Mammary epithelial cell (primary cell): ENCODE measurements at regions of chr13 and their contacts with region 1.

Region 1: DNA sequence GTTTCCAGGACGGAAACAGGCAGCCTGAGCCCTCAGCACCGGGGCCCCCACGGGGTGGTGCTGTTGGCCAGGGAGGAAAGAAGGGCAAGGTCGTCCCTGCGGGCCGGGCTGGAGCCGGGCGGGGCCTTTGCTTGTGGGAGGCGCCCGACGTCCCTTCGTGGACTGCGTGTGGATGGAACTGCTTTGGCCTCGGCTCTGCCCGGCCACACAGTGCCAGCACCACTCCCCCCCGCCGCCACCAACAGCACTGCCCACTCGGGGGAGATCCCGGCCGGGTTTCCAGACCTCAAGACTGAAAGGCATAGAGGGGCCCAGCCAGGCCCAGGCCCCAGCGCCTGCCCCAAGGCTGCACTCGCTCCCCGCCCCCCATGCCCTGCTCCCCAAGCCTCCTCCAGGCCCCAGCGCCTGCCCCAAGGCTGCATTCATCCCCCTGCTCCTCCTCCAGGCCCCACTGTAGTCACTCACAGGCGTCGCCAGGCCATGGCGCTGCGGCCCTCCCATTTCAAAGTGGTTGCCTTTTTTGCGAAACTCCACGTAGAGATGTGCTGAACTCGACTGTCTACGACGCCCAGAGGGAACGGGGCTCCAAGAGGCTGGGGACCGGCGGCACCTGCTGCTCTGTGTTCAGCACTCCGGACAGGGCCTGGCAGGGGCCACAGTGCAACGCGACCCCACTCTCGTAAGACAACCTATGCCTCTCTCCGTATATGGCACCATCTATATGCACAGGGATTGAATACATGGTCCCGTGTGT is 22.5 kb downstream of the C13orf46 start:
- DNase-seq: peak; percentile 68
- H3K4me3 ChIP-seq: no peak overlapping the region
- H3K27ac ChIP-seq: no peak overlapping the region
- H3K4me1 ChIP-seq: peaks cover 17% of the 10 kb centered on the region
- H3K27me3 ChIP-seq: no peaks in the 10 kb centered on the region
- CTCF ChIP-seq: peak; percentile 74 to 98

Region 2: GRCh38 chr13:112942689-112943308 is 1008.6 kb before region 1 on chr13:
- CTCF ChIA-PET with region 1: no interaction called
- dilution Hi-C with region 1: no loop called
- in situ Hi-C with region 1: no loop called
- intact Hi-C with region 1: loop called (anchors 10 kb)
- DNase-seq: peak; percentile 84
- H3K4me3 ChIP-seq: peak overlapping the region; percentile 43 to 52 (median 49)
- H3K27ac ChIP-seq: no peak overlapping the region
- H3K4me1 ChIP-seq: peaks cover 20% of the 10 kb centered on the region
- H3K27me3 ChIP-seq: peaks cover 4% of the 10 kb centered on the region
- CTCF ChIP-seq: peak; percentile 97 to 99

Region 3: DNA sequence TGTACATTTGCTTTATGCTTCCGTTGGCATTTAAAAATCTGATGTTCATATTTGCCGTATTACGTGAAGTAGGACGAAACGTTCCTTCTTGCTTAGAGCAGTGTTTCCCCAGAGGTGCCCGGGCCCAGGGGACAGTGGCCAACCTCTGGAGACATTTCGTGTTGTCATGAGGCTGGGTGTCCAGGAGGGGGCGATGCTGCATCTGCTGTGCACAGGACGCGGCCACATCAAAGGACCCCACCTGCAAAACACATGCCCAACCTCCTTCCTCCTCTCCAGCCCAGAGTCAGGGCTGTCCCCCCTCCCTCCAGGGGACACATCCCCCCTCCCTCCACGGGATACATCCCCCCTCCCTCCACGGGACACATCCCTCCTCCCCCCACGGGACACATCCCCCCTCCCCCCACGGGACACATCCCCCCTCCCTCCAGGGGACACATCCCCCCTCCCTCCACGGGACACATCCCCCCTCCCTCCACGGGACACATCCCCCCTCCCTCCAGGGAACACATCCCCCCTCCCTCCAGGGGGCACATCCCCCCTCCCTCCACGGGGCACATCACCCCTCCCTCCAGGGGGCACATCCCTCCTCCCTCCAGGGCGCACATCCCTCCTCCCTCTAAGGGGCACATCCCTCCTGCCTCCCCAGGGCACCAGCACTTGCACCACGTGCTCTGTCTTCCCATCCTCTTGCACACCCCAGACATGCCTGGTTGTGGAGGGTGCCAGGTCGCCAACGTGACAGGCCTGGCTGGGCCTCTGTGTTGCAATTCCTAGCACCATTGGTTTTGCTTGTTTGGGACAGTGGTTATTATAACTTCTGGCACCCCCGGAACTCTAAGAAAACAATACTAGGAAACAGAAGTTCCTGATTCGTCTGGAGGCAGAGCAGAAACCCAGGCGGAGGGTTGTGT is 134.2 kb before region 1 on chr13:
- CTCF ChIA-PET with region 1: interaction called, 3 read pairs
- dilution Hi-C with region 1: no loop called
- in situ Hi-C with region 1: no loop called
- intact Hi-C with region 1: loop called (anchors 1 kb)
- DNase-seq: peak; percentile 75
- H3K4me3 ChIP-seq: no peak overlapping the region
- H3K27ac ChIP-seq: no peak overlapping the region
- H3K4me1 ChIP-seq: peaks cover 30% of the 10 kb centered on the region
- H3K27me3 ChIP-seq: no peaks in the 10 kb centered on the region
- CTCF ChIP-seq: peak; percentile 76 to 95

Region 4: DNA sequence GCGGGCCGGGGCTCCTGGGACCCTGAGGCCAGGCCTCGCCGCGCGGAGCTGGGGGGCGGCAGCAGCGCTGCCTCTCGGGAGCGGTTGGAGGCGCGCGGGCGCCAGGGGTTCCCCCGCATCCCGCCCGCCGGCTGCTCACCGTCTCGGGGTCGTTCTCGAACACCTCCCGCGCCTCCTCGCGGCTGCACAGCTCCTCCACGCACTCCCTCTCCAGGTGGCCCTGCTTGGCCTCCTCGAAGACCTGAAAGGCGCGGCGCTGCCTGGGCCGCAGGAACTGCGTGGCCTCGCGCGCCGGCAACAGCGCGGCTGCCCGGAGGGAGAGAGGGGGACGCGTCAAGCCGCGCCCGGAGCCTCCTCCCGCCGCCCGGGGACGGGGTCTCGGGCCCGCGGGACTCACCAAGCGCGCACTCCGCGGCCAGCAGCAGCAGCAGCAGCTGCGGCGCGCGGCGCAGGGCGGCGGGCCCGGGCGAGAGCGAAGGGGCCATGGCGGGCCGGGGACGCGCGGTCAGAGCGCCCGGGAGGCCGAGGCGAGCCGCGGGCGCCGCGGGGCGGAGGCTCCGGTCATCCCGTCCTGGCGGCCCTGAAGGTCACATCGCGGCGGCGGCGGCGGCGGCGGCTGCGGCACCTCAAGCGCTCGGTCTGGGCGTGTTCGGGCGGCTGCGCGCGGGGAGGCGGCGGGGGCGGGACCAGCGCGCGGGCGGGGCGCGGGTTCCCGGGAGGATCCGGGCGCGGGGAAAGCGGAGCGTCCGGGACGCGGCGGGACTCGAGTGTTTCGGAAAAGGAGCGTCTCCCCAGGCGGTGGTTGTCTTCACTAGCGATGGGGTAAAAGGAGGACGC is 87.8 kb before region 1 on chr13 and contains the start of gene GAS6:
- CTCF ChIA-PET with region 1: no interaction called
- dilution Hi-C with region 1: loop called (anchors 5 kb)
- in situ Hi-C with region 1: no loop called
- intact Hi-C with region 1: loop called (anchors 1 kb)
- DNase-seq: peak; percentile 46
- H3K4me3 ChIP-seq: peak within 1 kb of the TSS; percentile 45 to 86 (median 66)
- H3K27ac ChIP-seq: peak within 1 kb of the TSS; percentile 71
- H3K4me1 ChIP-seq: peaks cover 38% of the 10 kb centered on the region
- H3K27me3 ChIP-seq: no peaks in the 10 kb centered on the region
- CTCF ChIP-seq: peak in 1 of 2 donors; percentile 32
- total RNA-seq, gene GAS6: 221 to 311 TPM

Region 5: GRCh38 chr13:114035583-114036531 is 84.4 kb after region 1 on chr13:
- CTCF ChIA-PET with region 1: no interaction called
- dilution Hi-C with region 1: loop called (anchors 10 kb)
- in situ Hi-C with region 1: no loop called
- intact Hi-C with region 1: no loop called
- DNase-seq: no peak
- H3K4me3 ChIP-seq: no peak overlapping the region
- H3K27ac ChIP-seq: no peak overlapping the region
- H3K4me1 ChIP-seq: no peaks in the 10 kb centered on the region
- H3K27me3 ChIP-seq: peaks cover 2% of the 10 kb centered on the region
- CTCF ChIP-seq: no peak

Region 6: GRCh38 chr13:114132419-114133121 is 181.1 kb after region 1 on chr13 and contains the start of gene RASA3:
- CTCF ChIA-PET with region 1: no interaction called
- dilution Hi-C with region 1: no loop called
- in situ Hi-C with region 1: no loop called
- intact Hi-C with region 1: loop called (anchors 1 kb)
- DNase-seq: peak; percentile 71
- H3K4me3 ChIP-seq: peak within 1 kb of the TSS; percentile 33 to 64 (median 50)
- H3K27ac ChIP-seq: no peak within 1 kb of the TSS
- H3K4me1 ChIP-seq: peaks cover 16% of the 10 kb centered on the region
- H3K27me3 ChIP-seq: no peaks in the 10 kb centered on the region
- CTCF ChIP-seq: no peak
- total RNA-seq, gene RASA3: 5.2 to 8.4 TPM

Region 7: GRCh38 chr13:114226699-114227323 is 275.4 kb after region 1 on chr13:
- CTCF ChIA-PET with region 1: no interaction called
- dilution Hi-C with region 1: no loop called
- in situ Hi-C with region 1: no loop called
- intact Hi-C with region 1: loop called (anchors 1 kb)
- DNase-seq: peak; percentile 69
- H3K4me3 ChIP-seq: no peak overlapping the region
- H3K27ac ChIP-seq: no peak overlapping the region
- H3K4me1 ChIP-seq: peaks cover 4% of the 10 kb centered on the region
- H3K27me3 ChIP-seq: no peaks in the 10 kb centered on the region
- CTCF ChIP-seq: peak; percentile 97